ENCODE measurements at regions of chr13 and their contacts with region 1.

Region 1: GRCh38 chr13:26253787-26254582 is at the start of gene CDK8:
- DNase-seq: peak; percentile 62 to 93
- H3K4me3 ChIP-seq: peak within 1 kb of the TSS; percentile 86 to 98
- H3K27ac ChIP-seq: peak within 1 kb of the TSS; percentile 94 to 96
- H3K4me1 ChIP-seq: peaks cover 5 to 11% of the 10 kb centered on the region in 2 donors
- H3K27me3 ChIP-seq: no peaks in the 10 kb centered on the region
- CTCF ChIP-seq: no peak
- total RNA-seq, gene CDK8: 4.3 TPM

Region 2: DNA sequence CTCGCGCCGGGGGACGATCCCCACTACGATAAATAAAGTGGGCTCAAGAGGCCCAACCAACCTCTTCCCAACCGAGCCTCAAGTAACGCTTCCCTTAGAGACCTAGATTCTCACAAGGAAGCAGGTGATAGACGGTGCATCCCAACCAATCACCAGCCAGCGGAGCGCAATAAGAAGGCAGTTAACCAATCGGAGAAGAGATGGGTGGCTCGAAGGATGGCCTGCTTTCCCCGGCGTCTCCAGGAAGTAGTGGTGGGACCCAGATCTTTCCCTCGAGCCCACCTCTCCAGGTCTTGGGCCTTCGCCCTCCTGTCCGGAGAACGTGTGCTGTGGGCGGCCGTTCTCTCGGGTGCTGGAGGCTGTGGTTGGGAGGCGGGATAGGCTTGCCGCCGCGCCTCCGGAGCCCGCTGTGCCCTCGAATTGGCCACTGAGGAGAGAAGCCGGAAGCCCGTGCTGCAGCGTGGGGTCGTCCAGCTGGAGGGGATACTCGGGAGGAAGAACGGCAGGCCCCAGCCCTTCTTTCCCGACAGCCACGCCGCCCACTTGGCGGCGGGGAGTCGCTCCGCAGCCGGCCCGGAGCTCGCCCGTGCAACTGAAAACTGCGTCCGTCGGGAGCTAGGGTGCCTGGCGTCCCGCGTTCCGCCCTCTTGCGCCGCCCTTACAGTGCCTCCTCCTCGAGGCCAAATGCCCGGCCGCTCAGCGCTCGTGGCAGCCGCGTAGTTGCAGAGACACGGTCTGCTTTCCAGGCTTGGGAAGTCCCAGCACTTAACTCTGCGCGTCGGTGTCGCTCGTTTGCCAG is 32.1 kb before region 1 on chr13 and contains the start of gene RNF6:
- intact Hi-C with region 1: loop called (anchors 1 kb)
- DNase-seq: peak; percentile 91 to 98
- H3K4me3 ChIP-seq: peak within 1 kb of the TSS; percentile 75 to 76
- H3K27ac ChIP-seq: peak within 1 kb of the TSS; percentile 91 to 97
- H3K4me1 ChIP-seq: peaks cover 0 to 12% of the 10 kb centered on the region in 2 donors
- H3K27me3 ChIP-seq: no peaks in the 10 kb centered on the region
- CTCF ChIP-seq: no peak
- total RNA-seq, gene RNF6: 15.8 TPM

Region 3: DNA sequence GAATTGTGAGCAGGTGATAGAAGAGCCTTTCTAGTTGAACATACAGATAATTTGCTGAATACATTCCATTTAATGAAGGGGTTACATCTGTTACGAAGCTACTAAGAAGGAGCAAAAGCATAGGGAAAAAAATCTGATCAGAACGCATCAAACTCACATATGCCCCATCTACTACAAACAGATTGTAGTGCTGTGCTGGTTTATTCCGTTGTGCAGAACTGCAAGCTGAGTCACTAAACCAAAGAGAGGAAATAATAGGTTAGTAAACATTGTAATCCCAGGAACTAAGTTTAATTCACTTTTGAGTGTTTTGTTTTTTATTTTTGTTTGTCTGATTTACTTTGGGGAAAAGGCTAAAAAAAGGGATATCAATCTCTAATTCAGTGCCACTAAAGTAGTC is 136.2 kb after region 1 on chr13:
- intact Hi-C with region 1: no loop called
- DNase-seq: no peak
- H3K4me3 ChIP-seq: no peak overlapping the region
- H3K27ac ChIP-seq: no peak overlapping the region
- H3K4me1 ChIP-seq: no peaks in the 10 kb centered on the region
- H3K27me3 ChIP-seq: no peaks in the 10 kb centered on the region
- CTCF ChIP-seq: no peak

Region 4: DNA sequence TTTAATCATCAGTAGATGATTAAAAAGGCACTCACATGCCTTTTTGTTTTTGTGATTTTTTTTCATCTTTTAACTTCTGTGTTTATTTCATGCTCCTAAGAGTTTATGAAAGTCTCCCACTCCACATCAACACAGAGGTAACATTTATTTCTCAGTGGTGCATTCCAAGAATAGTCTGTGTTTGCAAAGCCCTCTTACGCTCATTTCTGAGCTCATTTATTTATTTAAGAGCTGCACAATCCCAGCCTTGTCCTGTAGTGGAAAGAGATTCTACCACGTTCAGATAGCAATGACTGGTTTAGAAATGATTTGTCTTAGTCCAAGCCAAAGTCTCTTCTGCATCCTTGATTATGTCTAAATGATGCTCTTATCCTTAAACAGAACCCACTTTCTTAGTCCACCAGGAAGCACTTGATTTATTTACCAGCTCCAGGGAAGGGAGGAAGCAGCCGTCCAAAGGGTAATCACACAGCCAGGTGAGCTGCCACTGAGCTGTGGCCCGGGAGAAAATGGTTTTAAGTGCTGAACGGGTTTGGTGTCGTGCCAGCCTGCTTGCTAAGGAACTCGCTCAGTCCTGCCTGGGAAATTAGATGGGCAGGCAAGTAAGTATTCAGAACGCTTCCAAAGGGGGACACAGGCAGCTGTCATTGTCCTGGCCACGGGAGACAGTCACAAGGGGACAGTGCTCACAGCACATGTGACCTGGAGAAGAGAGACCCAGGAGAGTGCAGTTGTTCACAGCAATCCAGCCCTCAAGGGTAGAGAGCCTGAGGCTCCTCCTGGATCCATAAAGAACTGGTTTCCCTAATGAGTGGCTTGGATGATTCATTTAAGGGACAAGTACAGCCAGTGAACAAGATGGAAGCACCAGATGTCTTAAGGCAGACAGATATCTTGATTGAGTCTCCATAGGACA is 171.7 kb after region 1 on chr13:
- intact Hi-C with region 1: loop called (anchors 5 kb)
- DNase-seq: no peak
- H3K4me3 ChIP-seq: no peak overlapping the region
- H3K27ac ChIP-seq: peak overlapping the region; percentile 47 to 86
- H3K4me1 ChIP-seq: peaks cover 0 to 11% of the 10 kb centered on the region in 2 donors
- H3K27me3 ChIP-seq: no peaks in the 10 kb centered on the region
- CTCF ChIP-seq: no peak

Region 5: DNA sequence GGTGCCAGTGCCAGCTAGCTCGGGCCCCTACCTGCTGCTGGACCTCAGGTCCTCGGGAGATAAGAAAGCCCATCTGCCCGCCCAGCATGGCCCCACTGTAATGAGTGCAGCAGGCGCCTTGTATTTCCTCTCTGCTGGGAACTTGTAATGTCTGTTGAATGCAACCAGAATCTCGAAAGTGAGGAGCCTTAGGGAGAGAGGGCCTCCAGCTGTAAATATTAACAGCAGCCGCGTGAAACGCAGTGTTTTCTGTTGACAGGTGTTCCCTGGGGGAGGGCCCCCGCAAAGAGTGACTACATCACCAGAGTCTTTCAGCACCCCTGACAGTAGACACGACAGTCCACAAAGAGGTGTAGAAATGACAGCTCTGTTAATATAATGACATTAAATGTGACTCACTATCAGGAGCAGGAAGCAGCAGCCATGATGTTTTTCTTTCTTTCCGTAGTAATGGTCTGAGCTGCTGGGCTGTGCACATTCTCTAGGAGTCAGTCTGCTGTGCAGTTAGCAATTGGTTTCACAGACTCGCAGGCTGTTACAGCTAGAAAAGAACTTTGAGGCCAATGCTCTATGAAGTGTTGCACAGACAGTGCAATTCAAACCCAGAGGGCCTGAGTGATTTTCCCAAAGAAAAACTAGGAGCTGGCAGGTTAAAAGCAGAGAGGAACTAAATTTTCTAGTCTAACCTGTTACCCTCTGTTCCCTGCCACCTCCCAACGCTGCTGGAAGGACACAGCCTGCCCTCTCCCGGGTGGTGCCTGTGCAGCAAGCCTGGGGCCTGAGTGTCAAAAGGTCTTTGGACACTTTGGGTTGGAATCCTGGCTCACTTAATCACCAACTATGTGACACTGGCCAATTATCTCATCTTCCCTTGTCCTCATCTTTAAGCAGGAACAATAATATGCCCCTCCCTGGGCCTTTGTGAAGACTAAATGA is 244.9 kb after region 1 on chr13:
- intact Hi-C with region 1: loop called (anchors 10 kb)
- DNase-seq: no peak
- H3K4me3 ChIP-seq: no peak overlapping the region
- H3K27ac ChIP-seq: no peak overlapping the region
- H3K4me1 ChIP-seq: no peaks in the 10 kb centered on the region
- H3K27me3 ChIP-seq: no peaks in the 10 kb centered on the region
- CTCF ChIP-seq: no peak

Region 6: GRCh38 chr13:26544707-26545106 is 290.7 kb after region 1 on chr13:
- intact Hi-C with region 1: no loop called
- DNase-seq: no peak
- H3K4me3 ChIP-seq: no peak overlapping the region
- H3K27ac ChIP-seq: no peak overlapping the region
- H3K4me1 ChIP-seq: no peaks in the 10 kb centered on the region
- H3K27me3 ChIP-seq: no peaks in the 10 kb centered on the region
- CTCF ChIP-seq: no peak

Region 7: GRCh38 chr13:26557393-26558023 is 303.5 kb after region 1 on chr13 and contains the start of gene WASF3:
- intact Hi-C with region 1: loop called (anchors 2 kb)
- DNase-seq: peak; percentile 36 to 94
- H3K4me3 ChIP-seq: peak within 1 kb of the TSS; percentile 70 to 89
- H3K27ac ChIP-seq: peak within 1 kb of the TSS in 1 of 2 donors; percentile 59
- H3K4me1 ChIP-seq: peaks cover 6 to 7% of the 10 kb centered on the region in 2 donors
- H3K27me3 ChIP-seq: no peaks in the 10 kb centered on the region
- CTCF ChIP-seq: peak in 1 of 3 experiments; percentile 6
- total RNA-seq, gene WASF3: 14.3 TPM

Measured in ascending aorta (tissue), 2 donors.